SK-N-SH (cell line): ENCODE measurements at regions of chr10 and their contacts with region 1.

Region 1: DNA sequence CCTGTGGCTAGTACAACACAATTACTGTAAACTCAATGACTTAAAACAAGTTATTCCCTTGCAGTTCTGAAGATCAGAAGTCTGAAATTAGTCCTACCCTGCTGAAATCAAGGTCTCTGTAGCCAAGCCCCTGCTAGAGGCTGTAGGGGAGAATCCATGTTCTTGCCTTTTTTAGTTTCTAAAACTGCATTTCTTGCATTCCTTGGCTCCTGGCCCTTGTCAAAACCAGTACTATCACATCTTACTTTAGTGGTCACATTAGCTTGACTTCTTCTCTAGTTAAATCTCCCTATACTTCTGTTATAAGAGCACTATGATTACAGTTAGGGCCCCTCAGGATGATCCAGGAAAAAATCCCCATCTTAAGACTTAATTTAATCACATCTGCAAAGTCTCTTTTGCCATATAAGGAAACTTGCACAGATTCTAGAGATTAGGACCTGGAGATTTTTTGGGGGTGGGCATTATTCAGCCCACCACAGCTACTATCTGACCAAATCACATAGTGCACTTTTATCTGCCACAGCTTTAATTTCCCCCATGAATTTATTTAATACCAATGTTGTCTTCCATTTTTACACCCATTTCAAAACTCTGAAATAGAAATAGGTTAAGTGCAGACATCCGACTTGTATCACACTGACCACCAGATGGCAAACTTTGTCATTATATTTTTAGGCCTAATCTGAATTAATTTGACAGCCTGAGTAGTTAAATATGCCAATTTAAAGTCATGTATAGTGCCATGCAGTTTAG is 566.8 kb downstream of the GFRA1 start:
- DNase-seq: peak; percentile 2
- H3K4me3 ChIP-seq: no peak overlapping the region
- H3K27ac ChIP-seq: no peak overlapping the region
- H3K4me1 ChIP-seq: no peaks in the 10 kb centered on the region; a peak in 1 of 4 replicates
- H3K27me3 ChIP-seq: no peaks in the 10 kb centered on the region
- CTCF ChIP-seq: peak; percentile 74
- EP300 ChIP-seq: no peak
- RAD21 ChIP-seq: peak; percentile 70

Region 2: DNA sequence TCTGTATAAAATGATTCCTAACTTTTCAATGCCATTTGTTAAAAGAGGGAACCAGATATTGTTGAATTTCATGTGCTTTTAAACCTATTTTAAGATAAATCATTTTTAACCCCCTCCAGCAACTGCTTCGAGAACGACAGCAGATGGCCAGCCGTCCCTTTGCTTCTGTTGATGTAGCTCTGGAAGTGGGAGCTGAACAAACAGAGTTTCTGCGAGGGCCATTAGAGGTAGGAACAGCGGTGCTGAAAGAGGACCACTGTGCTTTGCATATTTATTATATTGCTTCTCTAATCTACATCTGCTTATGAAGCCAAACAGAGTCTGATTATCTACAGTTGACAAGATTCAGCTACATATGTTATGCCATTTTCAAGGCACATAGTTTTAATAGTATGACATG is 20.9 kb after region 1 on chr10:
- CTCF ChIA-PET with region 1: interaction called, 11 read pairs
- POLR2A ChIA-PET with region 1: no interaction called
- DNase-seq: peak; percentile 39
- H3K4me3 ChIP-seq: no peak overlapping the region
- H3K27ac ChIP-seq: no peak overlapping the region; a peak in 1 of 4 replicates
- H3K4me1 ChIP-seq: no peaks in the 10 kb centered on the region; a peak in 2 of 4 replicates
- H3K27me3 ChIP-seq: no peaks in the 10 kb centered on the region
- CTCF ChIP-seq: no peak
- EP300 ChIP-seq: no peak
- RAD21 ChIP-seq: no peak; the same call in 1 of the 2 replicates

Region 3: DNA sequence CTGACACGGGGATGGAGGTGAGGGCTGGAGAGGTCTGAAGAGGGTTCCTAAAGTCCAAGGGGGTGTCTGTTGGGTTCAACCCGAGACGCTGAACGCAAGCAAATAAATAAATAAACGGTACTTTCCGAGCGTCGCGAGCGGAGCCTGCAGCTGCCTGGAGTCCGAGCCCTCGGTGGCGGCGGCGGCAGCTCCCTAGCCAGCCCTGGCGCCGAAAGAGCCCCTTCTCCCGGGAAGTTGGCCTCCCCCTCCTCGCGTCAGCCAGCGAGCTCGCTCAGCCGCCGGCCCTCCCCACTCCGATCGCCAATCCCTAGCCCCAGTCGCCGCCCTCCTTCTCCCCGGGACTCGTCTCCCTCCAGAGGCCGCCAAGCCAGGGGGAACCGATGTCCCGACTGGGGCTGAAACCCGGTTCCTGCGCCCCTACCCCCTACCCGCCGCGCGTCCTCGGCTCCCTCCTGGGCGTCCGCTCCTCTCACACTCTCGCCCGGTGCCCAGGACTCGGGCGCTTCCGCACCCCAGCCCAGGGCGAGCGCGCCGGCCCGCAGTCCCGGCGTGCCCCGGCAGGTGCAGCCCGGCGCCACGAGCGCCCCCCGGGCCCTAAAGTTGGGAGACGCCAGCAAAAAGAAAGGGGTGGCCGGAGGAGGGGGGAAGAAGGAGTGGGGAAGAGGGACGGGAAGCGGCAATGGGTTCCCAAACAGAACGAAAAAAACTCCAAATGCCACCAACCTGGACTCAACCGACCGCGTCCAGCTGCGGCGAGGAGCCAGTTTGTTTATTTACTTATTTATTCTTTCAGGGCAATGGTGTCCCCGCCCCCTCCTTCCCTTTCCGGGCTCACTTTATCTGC is 566.5 kb after region 1 on chr10 and contains the start of gene GFRA1:
- CTCF ChIA-PET with region 1: interaction called, 13 read pairs
- POLR2A ChIA-PET with region 1: no interaction called
- DNase-seq: peak; percentile 79
- H3K4me3 ChIP-seq: peak within 1 kb of the TSS; percentile 53 to 57
- H3K27ac ChIP-seq: no peak within 1 kb of the TSS
- H3K4me1 ChIP-seq: peaks cover 4 to 22% of the 10 kb centered on the region in 2 experiments; a peak in 1 of 4 replicates
- H3K27me3 ChIP-seq: peaks cover 41% of the 10 kb centered on the region
- CTCF ChIP-seq: no peak
- EP300 ChIP-seq: no peak
- RAD21 ChIP-seq: no peak
- polyA plus RNA-seq, gene GFRA1: 1.6 and 2.6 TPM in 2 replicates

Region 4: GRCh38 chr10:116385994-116386809 is 680.0 kb after region 1 on chr10:
- CTCF ChIA-PET with region 1: interaction called, 29 read pairs
- POLR2A ChIA-PET with region 1: no interaction called
- DNase-seq: no peak
- H3K4me3 ChIP-seq: no peak overlapping the region; a peak in 1 of 4 replicates
- H3K27ac ChIP-seq: no peak overlapping the region
- H3K4me1 ChIP-seq: no peaks in the 10 kb centered on the region; a peak in 1 of 4 replicates
- H3K27me3 ChIP-seq: no peaks in the 10 kb centered on the region
- CTCF ChIP-seq: peak; percentile 66
- EP300 ChIP-seq: no peak
- RAD21 ChIP-seq: peak; percentile 83